ENCODE measurements at regions of chr13 and their contacts with region 1.

Region 1: DNA sequence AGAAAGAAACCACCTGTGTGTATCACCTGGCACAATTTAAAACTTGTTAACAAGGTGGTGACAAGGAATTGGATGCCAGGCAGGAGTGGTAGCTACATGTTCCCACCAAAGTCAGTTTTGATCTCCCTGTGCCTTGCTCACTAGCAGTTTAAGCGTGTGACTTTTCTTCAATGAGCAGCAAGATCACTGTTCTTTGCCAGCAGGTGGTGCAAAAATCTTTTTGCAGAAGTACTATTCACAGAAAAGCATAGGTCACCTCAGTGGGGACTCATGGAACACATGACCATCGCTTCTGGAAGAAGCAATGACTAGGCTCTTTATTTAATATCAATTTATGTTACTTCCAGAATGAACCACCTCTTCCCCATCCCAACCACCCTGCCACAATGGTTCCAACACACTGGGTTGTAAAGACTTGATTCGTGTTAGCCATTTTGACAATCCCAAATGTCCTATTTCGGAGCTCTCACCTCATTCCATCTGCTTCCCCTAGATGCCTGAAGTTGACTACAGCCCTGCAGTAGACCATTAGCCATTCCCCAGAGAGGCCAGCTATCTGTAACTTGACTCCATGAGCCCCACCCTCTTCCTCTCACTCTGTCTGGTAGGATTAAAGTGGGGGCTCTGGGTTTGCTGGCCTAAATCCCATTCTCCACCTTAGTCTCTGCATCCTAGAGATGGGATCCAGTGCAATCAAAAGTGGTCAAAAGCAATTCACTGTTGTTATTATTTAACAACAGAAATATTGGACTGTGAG is 59.1 kb upstream of the TNFRSF19 start:
- DNase-seq: no peak
- H3K4me3 ChIP-seq: no peak overlapping the region
- H3K27ac ChIP-seq: no peak overlapping the region
- H3K4me1 ChIP-seq: no peaks in the 10 kb centered on the region; a peak in 1 of 7 replicates
- H3K27me3 ChIP-seq: no peaks in the 10 kb centered on the region
- CTCF ChIP-seq: no peak
- EP300 ChIP-seq: no peak
- POLR2A ChIP-seq: no peak
- RAD21 ChIP-seq: no peak

Region 2: GRCh38 chr13:23447927-23448326 is 63.2 kb before region 1 on chr13:
- CTCF ChIA-PET with region 1: no interaction called
- POLR2A ChIA-PET with region 1: no interaction called
- DNase-seq: no peak
- H3K4me3 ChIP-seq: no peak overlapping the region
- H3K27ac ChIP-seq: no peak overlapping the region
- H3K4me1 ChIP-seq: peaks cover 0 to 26% (median 17%) of the 10 kb centered on the region in 4 experiments; a peak in 5 of 7 replicates
- H3K27me3 ChIP-seq: no peaks in the 10 kb centered on the region
- CTCF ChIP-seq: no peak
- EP300 ChIP-seq: no peak
- POLR2A ChIP-seq: no peak
- RAD21 ChIP-seq: no peak

Region 3: DNA sequence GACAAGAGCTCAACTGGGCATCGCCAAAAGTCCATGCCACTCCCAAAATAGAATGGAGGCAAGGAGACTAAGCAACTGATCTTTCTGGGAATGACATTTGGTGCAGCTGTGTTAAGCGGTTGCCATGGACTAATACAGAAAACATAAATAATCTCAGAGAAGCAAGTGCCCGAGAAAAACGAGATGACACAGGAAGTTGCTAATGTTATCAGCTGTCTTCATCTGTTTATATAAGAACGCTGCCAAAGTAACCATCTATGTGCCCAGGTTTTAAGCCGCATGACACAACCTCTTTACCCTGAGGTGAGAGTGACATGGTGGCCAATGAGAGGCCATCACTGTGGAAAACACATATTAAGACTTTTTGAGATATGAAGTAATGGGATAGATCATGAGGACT is 22.7 kb before region 1 on chr13:
- CTCF ChIA-PET with region 1: interaction called, 16 read pairs
- POLR2A ChIA-PET with region 1: no interaction called
- DNase-seq: no peak
- H3K4me3 ChIP-seq: no peak overlapping the region
- H3K27ac ChIP-seq: no peak overlapping the region
- H3K4me1 ChIP-seq: no peaks in the 10 kb centered on the region
- H3K27me3 ChIP-seq: no peaks in the 10 kb centered on the region
- CTCF ChIP-seq: no peak
- EP300 ChIP-seq: no peak
- POLR2A ChIP-seq: no peak
- RAD21 ChIP-seq: no peak

Region 4: GRCh38 chr13:23500849-23501248 is 10.3 kb before region 1 on chr13:
- CTCF ChIA-PET with region 1: interaction called, 32 read pairs
- POLR2A ChIA-PET with region 1: interaction called, 3 read pairs
- DNase-seq: no peak
- H3K4me3 ChIP-seq: no peak overlapping the region
- H3K27ac ChIP-seq: no peak overlapping the region
- H3K4me1 ChIP-seq: peaks cover 0 to 2% (median 0%) of the 10 kb centered on the region in 4 experiments; a peak in 1 of 7 replicates
- H3K27me3 ChIP-seq: no peaks in the 10 kb centered on the region
- CTCF ChIP-seq: no peak
- EP300 ChIP-seq: no peak
- POLR2A ChIP-seq: no peak
- RAD21 ChIP-seq: no peak

Region 5: DNA sequence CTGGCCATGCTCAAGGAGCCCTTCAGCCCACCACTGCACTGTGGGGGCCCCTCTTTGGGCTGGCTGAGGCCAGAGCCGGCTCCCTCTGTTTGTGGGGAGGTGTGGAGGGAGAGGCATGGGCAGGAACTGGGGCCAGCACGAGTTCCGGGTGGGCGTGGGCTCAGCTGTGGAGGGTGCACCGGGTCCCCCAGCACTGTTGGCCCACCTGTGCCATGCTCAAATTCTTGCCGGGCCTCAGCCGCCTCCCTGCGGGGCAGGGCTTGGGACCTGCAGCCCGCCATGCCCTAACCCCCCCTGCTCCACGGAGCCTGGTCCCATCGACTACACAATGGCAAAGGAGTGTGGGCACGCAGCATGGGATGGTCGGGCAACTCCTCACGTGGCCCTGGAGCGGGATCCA is 20.3 kb after region 1 on chr13:
- CTCF ChIA-PET with region 1: interaction called, 18 read pairs
- POLR2A ChIA-PET with region 1: no interaction called
- DNase-seq: no peak
- H3K4me3 ChIP-seq: no peak overlapping the region
- H3K27ac ChIP-seq: no peak overlapping the region
- H3K4me1 ChIP-seq: no peaks in the 10 kb centered on the region
- H3K27me3 ChIP-seq: no peaks in the 10 kb centered on the region
- CTCF ChIP-seq: no peak
- EP300 ChIP-seq: no peak
- POLR2A ChIP-seq: no peak
- RAD21 ChIP-seq: no peak

Region 6: GRCh38 chr13:23541221-23541824 is 30.2 kb after region 1 on chr13:
- CTCF ChIA-PET with region 1: interaction called, 18 read pairs
- POLR2A ChIA-PET with region 1: no interaction called
- DNase-seq: no peak
- H3K4me3 ChIP-seq: no peak overlapping the region
- H3K27ac ChIP-seq: no peak overlapping the region
- H3K4me1 ChIP-seq: no peaks in the 10 kb centered on the region
- H3K27me3 ChIP-seq: no peaks in the 10 kb centered on the region
- CTCF ChIP-seq: no peak
- EP300 ChIP-seq: no peak
- POLR2A ChIP-seq: no peak
- RAD21 ChIP-seq: no peak

Region 7: GRCh38 chr13:23609414-23609760 is 98.2 kb after region 1 on chr13:
- CTCF ChIA-PET with region 1: no interaction called
- POLR2A ChIA-PET with region 1: no interaction called
- DNase-seq: no peak
- H3K4me3 ChIP-seq: no peak overlapping the region
- H3K27ac ChIP-seq: no peak overlapping the region
- H3K4me1 ChIP-seq: peaks cover 0 to 5% (median 2%) of the 10 kb centered on the region in 4 experiments; a peak in 3 of 7 replicates
- H3K27me3 ChIP-seq: no peaks in the 10 kb centered on the region
- CTCF ChIP-seq: no peak
- EP300 ChIP-seq: no peak
- POLR2A ChIP-seq: no peak
- RAD21 ChIP-seq: no peak